Naive thymus-derived CD8-positive, alpha-beta T cell (primary cell): ENCODE measurements at regions of chr14 and their contacts with region 1.

Region 1: DNA sequence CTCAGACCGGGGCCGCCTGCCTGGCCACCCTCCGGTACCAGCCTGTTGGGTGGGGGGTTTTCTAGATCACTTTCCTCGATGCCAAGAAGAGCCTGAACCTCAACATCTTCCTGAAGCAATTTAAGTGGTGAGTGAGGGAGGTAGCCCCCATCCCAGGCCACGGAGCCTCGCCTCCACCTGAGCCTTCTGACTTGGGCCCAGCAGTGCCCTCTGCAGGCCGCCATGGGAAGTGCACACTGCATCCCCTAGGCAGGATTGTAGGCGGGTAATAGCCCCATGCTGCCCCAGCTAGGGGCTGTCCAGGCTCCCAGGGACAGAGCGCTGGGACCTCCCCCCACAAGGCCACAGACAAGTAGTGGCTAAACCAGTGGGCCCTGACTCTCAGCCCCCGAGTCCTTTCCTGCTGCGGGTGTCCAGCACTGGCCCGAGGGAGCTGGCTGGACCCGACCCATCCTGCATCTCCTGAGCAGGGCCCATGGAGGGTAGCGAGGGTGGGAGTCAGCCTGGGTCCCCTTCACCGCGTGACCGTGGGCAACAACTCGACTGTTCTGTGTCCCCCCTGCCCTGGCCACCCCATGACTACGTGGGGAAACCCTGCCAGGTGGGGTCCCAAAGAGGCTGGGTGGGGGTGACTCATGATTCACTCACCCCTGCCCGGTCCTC is 15.3 kb upstream of the ADSS1 start:
- DNase-seq: peak; percentile 55 to 82 (median 72)
- ATAC-seq: peak; percentile 90 to 94
- H3K4me3 Mint-ChIP-seq: no peak overlapping the region
- H3K27ac Mint-ChIP-seq: peak overlapping the region in 4 of 10 donors; percentile 14 to 77 (median 32)
- H3K4me1 Mint-ChIP-seq: peaks cover 2 to 6% (median 2%) of the 10 kb centered on the region in 4 donors
- H3K27me3 Mint-ChIP-seq: no peaks in the 10 kb centered on the region

Region 2: DNA sequence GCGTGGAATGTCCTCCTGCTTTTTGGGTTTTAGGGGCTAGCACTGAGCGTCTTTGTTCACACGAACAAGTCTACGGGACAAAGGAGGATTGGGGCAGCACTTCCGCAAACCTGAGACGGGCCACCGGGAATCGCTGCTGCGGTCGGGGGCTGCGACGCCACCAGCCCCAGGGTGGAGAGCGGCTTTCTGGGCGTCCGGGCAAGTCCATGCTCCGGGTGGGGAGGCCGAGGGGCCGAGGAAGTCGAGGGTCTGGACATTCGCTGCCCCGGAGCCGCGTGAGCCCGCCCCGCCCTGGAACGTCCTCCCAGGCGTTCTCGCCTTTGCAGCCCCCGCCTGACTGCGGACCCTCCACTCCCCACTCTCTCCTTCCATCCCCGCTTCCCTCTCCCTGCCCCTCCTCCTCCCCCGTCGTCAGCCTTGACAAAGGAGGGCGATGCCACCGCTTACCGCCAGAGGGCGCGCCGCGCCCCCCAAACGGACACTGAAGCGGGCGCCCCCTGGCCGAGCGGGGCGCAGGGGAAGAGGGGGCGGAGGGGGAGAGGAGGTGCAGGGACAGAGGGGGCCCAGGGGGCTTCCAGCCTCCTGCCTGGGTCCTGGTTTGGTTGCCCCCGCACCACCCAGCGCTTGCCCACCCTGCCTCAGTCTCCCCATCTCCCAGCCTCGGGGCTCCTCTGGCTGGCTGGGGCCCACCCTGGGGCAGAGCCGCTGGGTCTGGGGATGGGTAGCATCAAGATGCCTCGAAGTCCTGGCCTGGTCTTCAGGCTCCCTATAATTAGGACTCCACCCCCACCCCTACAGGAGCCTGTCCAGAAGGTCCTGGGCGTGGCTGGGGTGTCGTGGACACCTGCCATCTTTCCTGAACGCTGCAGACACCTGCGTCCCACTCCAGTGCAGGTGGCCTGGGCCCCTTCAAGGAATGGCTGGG is 58.4 kb before region 1 on chr14:
- POLR2A ChIA-PET with region 1: no interaction called
- DNase-seq: peak; percentile 57 to 84 (median 71)
- ATAC-seq: peak; percentile 88 to 96
- H3K4me3 Mint-ChIP-seq: peak overlapping the region in 9 of 10 donors; percentile 7 to 73 (median 24)
- H3K27ac Mint-ChIP-seq: no peak overlapping the region
- H3K4me1 Mint-ChIP-seq: peaks cover 0 to 18% (median 3%) of the 10 kb centered on the region in 4 donors
- H3K27me3 Mint-ChIP-seq: peaks cover 0 to 8% (median 1%) of the 10 kb centered on the region in 5 donors

Region 3: GRCh38 chr14:104665657-104666522 is 42.8 kb before region 1 on chr14:
- POLR2A ChIA-PET with region 1: interaction called, 12 read pairs
- DNase-seq: peak in 8 of 10 donors; percentile 31 to 79 (median 52)
- ATAC-seq: peak; percentile 98
- H3K4me3 Mint-ChIP-seq: peak overlapping the region in 7 of 10 donors; percentile 28 to 68 (median 49)
- H3K27ac Mint-ChIP-seq: peak overlapping the region in 7 of 10 donors; percentile 59 to 90 (median 79)
- H3K4me1 Mint-ChIP-seq: peaks cover 15 to 37% (median 20%) of the 10 kb centered on the region in 4 donors
- H3K27me3 Mint-ChIP-seq: peaks cover 0 to 7% (median 0%) of the 10 kb centered on the region in 5 donors